Activated CD8-positive, alpha-beta T cell treated with anti-CD3 and anti-CD28 coated beads for 36 hours (primary cell): ENCODE measurements at regions of chr3 and their contacts with region 1.

Region 1: GRCh38 chr3:8987645-8988383 is 24.5 kb upstream of the RAD18 start:
- DNase-seq: peak; percentile 79
- ATAC-seq: peak; percentile 96
- H3K4me3 Mint-ChIP-seq: no peak overlapping the region
- H3K27ac Mint-ChIP-seq: no peak overlapping the region
- H3K4me1 Mint-ChIP-seq: peaks cover 2% of the 10 kb centered on the region
- H3K27me3 Mint-ChIP-seq: no peaks in the 10 kb centered on the region
- CTCF ChIP-seq: peak; percentile 86

Region 2: DNA sequence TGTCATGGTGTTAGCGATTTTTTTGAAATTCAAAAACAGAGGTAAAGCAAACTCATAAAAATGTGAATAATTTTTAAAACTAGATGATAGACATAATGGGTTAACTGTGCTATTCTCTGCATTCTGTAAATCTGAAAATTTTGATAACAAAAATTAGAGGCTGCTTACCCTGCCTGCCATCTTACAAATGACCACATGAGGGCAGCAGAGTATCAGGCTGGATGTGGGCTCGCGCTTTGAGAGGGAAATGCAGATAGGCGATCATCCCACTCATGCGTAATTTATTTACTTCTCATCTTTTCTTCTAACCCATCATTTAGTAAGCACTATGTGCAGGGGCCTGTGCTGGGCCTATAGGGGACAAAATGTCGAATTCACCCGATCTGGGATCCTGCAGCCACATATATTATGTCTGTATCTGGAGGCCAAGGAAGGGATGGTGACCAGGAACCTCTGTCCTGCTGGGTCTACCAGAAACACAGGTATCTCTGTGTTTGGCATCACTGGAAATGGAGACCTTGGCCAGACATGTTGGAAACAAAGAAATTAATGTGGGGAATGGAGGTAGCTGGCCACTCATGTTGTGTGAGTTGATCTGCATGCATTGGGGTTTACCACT is 16.7 kb before region 1 on chr3:
- CTCF ChIA-PET with region 1: interaction called, 72 read pairs
- POLR2A ChIA-PET with region 1: interaction called, 3 read pairs
- intact Hi-C with region 1: no loop called
- DNase-seq: peak; percentile 81
- ATAC-seq: peak; percentile 90
- H3K4me3 Mint-ChIP-seq: no peak overlapping the region
- H3K27ac Mint-ChIP-seq: no peak overlapping the region
- H3K4me1 Mint-ChIP-seq: peaks cover 2% of the 10 kb centered on the region
- H3K27me3 Mint-ChIP-seq: peaks cover 9% of the 10 kb centered on the region
- CTCF ChIP-seq: peak; percentile 94

Region 3: GRCh38 chr3:9013782-9014563 is 26.2 kb after region 1 on chr3:
- CTCF ChIA-PET with region 1: interaction called, 28 read pairs
- POLR2A ChIA-PET with region 1: no interaction called
- intact Hi-C with region 1: no loop called
- DNase-seq: no peak
- ATAC-seq: no peak
- H3K4me3 Mint-ChIP-seq: no peak overlapping the region
- H3K27ac Mint-ChIP-seq: no peak overlapping the region
- H3K4me1 Mint-ChIP-seq: peaks cover 9% of the 10 kb centered on the region
- H3K27me3 Mint-ChIP-seq: no peaks in the 10 kb centered on the region
- CTCF ChIP-seq: no peak

Region 4: GRCh38 chr3:9067352-9067975 is 79.7 kb after region 1 on chr3:
- CTCF ChIA-PET with region 1: interaction called, 19 read pairs
- POLR2A ChIA-PET with region 1: no interaction called
- intact Hi-C with region 1: loop called (anchors 5 kb)
- DNase-seq: peak; percentile 61
- ATAC-seq: peak; percentile 74
- H3K4me3 Mint-ChIP-seq: no peak overlapping the region
- H3K27ac Mint-ChIP-seq: no peak overlapping the region
- H3K4me1 Mint-ChIP-seq: no peaks in the 10 kb centered on the region
- H3K27me3 Mint-ChIP-seq: no peaks in the 10 kb centered on the region
- CTCF ChIP-seq: peak; percentile 71